ENCODE measurements at regions of chr10 and their contacts with region 1.

Region 1: GRCh38 chr10:117461766-117462423 is 80.7 kb upstream of the EMX2 start:
- DNase-seq: peak; percentile 96
- H3K4me3 ChIP-seq: no peak overlapping the region
- CTCF ChIP-seq: no peak

Region 2: DNA sequence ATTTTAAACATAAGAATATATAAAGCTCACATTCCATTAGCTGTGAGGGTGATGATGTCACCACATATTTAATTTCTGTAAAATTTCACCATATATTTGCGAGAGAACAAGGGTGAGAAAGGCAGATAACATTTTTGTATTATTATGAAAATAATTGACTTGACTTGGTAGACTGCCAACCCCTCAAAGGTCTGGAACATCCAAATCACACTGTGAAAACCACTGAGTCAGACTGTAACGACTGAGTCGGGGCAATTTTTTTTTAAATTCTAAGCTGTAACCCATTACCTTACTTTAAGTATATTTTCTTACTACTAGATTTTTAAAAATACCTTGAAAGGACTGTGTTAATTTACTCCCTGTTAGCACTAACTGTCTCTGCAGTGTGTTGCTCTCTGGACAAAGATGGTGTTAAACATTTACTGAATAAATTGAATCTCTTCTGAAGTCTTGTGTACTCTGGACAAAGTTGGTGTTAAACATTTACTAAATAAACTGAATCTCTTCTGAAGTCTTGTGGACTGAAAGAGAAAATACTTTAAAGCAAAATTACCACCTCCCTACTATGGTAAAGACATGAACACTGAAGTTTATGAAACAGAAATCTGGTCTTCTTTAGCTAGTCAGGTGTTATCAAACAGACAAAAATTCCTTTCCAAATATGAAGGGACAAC is 100.8 kb before region 1 on chr10:
- CTCF ChIA-PET with region 1: no interaction called
- POLR2A ChIA-PET with region 1: no interaction called
- DNase-seq: no peak
- H3K4me3 ChIP-seq: no peak overlapping the region
- CTCF ChIP-seq: no peak

Region 3: GRCh38 chr10:117399341-117400073 is 62.4 kb before region 1 on chr10:
- CTCF ChIA-PET with region 1: no interaction called
- POLR2A ChIA-PET with region 1: no interaction called
- DNase-seq: no peak
- H3K4me3 ChIP-seq: no peak overlapping the region
- CTCF ChIP-seq: no peak

Region 4: GRCh38 chr10:117449636-117450035 is 12.3 kb before region 1 on chr10:
- CTCF ChIA-PET with region 1: interaction called, 35 read pairs
- POLR2A ChIA-PET with region 1: interaction called, 4 read pairs
- DNase-seq: no peak
- H3K4me3 ChIP-seq: no peak overlapping the region
- CTCF ChIP-seq: peak; percentile 12

Region 5: DNA sequence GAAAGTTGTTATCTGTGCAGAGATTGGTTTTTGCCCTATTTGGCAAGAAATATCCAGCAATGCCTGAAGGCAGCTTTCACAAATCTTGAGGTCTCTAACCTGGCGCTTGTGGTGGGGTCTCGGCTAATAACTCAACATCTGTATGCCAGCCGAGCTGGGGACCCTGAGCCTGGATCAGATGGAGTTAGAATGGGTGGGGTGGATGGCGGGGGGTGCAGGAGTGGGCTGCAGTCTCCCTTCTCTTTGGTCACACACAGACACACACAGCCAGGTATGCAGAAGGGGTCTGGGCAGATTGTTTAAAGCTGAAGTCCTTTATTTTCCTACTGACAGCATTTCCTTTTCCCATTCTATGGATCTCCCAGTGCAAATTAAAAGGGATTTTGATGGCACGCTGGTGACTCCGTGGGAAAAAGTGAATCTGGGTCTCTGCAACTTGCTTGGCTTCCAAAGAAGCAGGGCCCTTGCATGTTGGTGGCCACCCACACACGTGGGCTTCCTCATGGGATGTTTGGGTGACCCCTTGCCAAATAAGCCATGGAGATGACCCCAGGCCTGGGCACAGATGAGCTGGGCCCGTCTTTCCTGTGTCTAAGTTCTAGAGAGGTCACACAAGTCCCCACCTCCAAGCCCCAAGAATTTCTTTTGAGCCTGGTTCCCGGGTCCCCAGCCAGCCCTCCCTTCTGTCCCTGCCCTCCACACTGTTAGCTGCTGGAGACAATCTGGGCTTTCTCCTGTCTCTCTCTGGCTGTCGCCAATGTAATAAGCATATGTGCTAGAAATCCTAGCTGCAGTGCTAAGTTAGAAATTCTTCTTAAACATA is 40.7 kb after region 1 on chr10:
- CTCF ChIA-PET with region 1: no interaction called
- POLR2A ChIA-PET with region 1: no interaction called
- DNase-seq: no peak
- H3K4me3 ChIP-seq: no peak overlapping the region
- CTCF ChIP-seq: no peak

Region 6: DNA sequence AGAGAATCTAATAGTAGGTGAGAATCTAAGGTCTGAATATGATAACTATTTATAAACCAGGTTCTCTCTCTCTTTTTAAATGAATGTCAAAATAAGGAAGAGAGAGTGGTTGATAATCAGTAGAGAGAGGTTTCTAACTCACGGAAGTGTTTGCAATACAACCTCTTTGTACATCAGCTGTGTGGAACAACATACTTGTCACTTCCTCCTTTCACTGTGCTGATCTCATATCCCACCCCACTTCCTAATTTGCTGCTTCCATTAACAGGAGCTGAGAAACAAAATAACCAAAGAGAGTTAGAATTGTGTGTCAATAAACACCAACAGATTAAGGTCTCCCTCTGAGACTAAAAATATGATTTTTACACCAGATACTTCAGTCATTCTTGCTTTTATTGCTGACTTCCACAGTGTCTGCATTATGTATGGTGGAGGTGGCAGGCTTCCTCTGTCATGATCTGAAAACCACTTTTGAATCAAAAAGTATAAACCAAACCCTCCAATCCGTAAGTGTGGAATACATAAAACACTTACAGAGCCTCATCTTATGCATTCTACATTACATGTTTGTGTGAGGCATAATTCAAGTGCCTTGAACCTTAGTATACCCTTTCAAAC is 1267.9 kb after region 1 on chr10:
- CTCF ChIA-PET with region 1: no interaction called
- POLR2A ChIA-PET with region 1: no interaction called
- DNase-seq: no peak
- H3K4me3 ChIP-seq: no peak overlapping the region
- CTCF ChIP-seq: no peak

Measured in AG04449 (cell line).